ENCODE measurements at regions of chr6 and their contacts with region 1.

Region 1: DNA sequence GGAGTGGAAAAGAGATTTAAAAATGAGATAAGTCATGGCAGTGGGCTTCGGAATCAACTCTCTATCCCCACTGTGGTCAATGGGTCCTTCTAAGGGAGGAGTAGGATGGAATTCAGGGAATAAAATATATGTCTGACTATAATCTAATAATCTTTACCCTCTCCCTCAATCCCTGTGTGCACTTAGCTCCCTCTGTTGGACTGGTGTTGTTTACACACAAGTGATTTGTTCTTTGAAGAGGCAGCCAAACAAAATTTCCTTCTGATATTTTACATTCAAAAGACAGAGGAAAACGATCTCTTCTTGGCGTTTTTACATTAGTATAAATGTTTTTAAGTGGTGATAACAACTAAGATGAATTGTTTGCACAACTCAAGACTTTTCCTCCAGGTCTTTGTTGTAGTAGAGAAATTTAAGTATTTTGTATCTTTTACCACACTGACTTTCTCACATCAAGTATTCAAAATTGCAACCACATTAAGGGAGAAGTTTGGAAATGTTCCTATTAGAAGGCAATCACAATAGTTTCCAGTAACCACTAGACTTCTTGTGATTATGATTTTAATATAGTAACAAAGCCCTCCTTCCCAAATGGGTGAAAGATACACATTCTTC is 317.8 kb downstream of the CENPW start:
- DNase-seq: peak; percentile 69
- H3K4me3 ChIP-seq: no peak overlapping the region
- H3K27ac ChIP-seq: no peak overlapping the region
- H3K4me1 ChIP-seq: no peaks in the 10 kb centered on the region
- H3K27me3 ChIP-seq: no peaks in the 10 kb centered on the region
- CTCF ChIP-seq: peak; percentile 71

Region 2: GRCh38 chr6:126033696-126034095 is 624.0 kb before region 1 on chr6:
- CTCF ChIA-PET with region 1: no interaction called
- POLR2A ChIA-PET with region 1: no interaction called
- intact Hi-C with region 1: loop called (anchors 10 kb)
- DNase-seq: peak; percentile 84
- H3K4me3 ChIP-seq: no peak overlapping the region
- H3K27ac ChIP-seq: no peak overlapping the region
- H3K4me1 ChIP-seq: no peaks in the 10 kb centered on the region
- H3K27me3 ChIP-seq: no peaks in the 10 kb centered on the region
- CTCF ChIP-seq: peak; percentile 71

Region 3: DNA sequence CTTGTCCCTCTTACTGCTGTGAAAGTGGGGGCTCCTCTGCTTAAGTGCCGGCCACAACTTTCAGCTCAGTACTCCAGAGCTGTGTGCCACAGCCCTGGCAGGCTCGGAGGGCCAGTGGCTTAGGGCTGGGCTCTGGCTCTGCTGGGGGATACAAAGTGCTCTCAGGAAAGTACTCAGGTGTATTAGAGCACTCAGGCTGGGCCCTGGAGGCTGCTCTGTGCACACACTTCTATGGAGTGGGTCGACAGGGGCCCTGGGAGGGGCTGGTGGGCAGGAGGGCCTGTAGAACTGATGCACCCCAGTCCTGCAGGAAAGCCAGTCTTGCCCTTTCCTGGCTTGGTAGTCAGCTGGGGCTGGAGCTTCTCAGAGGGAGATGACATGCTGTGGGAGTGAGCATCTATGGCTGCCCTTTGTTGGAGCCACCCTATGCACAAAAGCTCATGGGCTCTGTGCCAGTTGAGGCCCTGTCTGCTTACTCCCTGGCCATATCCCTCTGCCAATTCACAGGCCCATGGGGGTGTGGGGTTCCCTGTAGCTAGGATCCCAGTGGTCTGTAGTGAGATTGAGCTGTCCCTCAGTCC is 295.7 kb before region 1 on chr6:
- CTCF ChIA-PET with region 1: interaction called, 4 read pairs
- POLR2A ChIA-PET with region 1: no interaction called
- intact Hi-C with region 1: loop called (anchors 1 kb)
- DNase-seq: peak; percentile 15
- H3K4me3 ChIP-seq: no peak overlapping the region
- H3K27ac ChIP-seq: no peak overlapping the region
- H3K4me1 ChIP-seq: peaks cover 2% of the 10 kb centered on the region
- H3K27me3 ChIP-seq: no peaks in the 10 kb centered on the region
- CTCF ChIP-seq: no peak

Region 4: GRCh38 chr6:127100510-127101140 is 443.0 kb after region 1 on chr6:
- CTCF ChIA-PET with region 1: no interaction called
- POLR2A ChIA-PET with region 1: no interaction called
- intact Hi-C with region 1: loop called (anchors 10 kb)
- DNase-seq: peak; percentile 54
- H3K4me3 ChIP-seq: no peak overlapping the region
- H3K27ac ChIP-seq: no peak overlapping the region
- H3K4me1 ChIP-seq: peaks cover 4% of the 10 kb centered on the region
- H3K27me3 ChIP-seq: no peaks in the 10 kb centered on the region
- CTCF ChIP-seq: peak; percentile 60

Region 5: DNA sequence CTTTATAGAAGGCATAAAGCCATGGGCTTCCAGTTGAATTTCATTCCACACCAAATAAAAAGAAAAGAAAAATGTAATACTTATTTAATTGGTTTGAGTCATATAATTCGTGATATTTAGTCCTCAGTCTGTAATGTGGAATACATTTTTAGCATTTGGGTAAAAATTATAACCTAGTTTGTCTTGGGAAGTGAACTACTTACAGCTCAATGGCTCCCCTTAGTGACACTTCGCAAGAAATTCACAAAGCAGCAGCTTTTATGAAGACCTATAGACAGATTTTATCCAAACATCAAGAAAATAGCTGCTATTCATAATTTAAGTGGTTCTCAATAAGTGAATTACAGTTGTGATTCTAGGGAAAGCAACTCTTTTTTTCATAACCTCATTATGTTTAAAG is 532.9 kb after region 1 on chr6:
- CTCF ChIA-PET with region 1: no interaction called
- POLR2A ChIA-PET with region 1: no interaction called
- intact Hi-C with region 1: loop called (anchors 10 kb)
- DNase-seq: peak; percentile 54
- H3K4me3 ChIP-seq: no peak overlapping the region
- H3K27ac ChIP-seq: no peak overlapping the region
- H3K4me1 ChIP-seq: no peaks in the 10 kb centered on the region
- H3K27me3 ChIP-seq: no peaks in the 10 kb centered on the region
- CTCF ChIP-seq: peak; percentile 80

Measured in A673 (cell line).